CD8-positive, alpha-beta T cell (primary cell): ENCODE measurements at regions of chr9 and their contacts with region 1.

Region 1: DNA sequence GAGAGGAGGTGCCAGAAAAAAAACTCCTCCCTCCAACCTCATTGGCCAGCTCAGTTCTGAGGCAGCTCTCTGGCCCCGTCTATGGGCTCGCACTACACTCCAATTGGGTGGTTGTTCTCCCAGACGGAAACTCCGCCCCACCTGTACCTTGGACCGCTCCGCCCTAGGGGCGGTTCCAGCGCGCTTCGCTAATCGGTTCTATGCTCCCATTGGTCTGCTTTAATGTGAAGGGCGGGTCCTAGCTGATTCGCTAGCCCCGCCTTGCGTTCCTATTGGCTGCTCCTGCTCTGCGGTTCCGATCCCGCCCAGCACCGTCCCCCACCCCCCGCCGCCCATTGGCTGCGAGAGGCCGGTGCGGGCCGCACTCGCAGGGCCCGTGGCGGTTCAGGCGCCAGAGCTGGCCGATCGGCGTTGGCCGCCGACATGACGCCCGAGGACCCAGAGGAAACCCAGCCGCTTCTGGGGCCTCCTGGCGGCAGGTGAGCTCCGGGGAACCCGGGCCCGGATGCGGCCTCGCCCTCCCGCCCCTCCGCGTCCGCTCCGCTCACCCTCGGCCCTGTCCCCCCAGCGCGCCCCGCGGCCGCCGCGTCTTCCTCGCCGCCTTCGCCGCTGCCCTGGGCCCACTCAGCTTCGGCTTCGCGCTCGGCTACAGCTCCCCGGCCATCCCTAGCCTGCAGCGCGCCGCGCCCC is at the start of gene SLC2A8:
- DNase-seq: peak; percentile 73 to 98 (median 86)
- ATAC-seq: peak; percentile 92
- H3K4me3 ChIP-seq: peak within 1 kb of the TSS; percentile 44 to 49
- H3K4me3 Mint-ChIP-seq: peak within 1 kb of the TSS; percentile 76
- H3K27ac ChIP-seq: no peak within 1 kb of the TSS
- H3K27ac Mint-ChIP-seq: no peak within 1 kb of the TSS
- H3K4me1 ChIP-seq: peaks cover 24% of the 10 kb centered on the region
- H3K4me1 Mint-ChIP-seq: peaks cover 17% of the 10 kb centered on the region
- H3K27me3 ChIP-seq: peaks cover 19 to 40% of the 10 kb centered on the region in 2 experiments
- H3K27me3 Mint-ChIP-seq: peaks cover 68% of the 10 kb centered on the region
- CTCF ChIP-seq: no peak
- total RNA-seq, gene SLC2A8: 3.6 to 3.9 TPM

Region 2: GRCh38 chr9:126722252-126723078 is 674.5 kb before region 1 on chr9:
- CTCF ChIA-PET with region 1: no interaction called
- POLR2A ChIA-PET with region 1: no interaction called
- intact Hi-C with region 1: no loop called
- DNase-seq: peak; percentile 66 to 94 (median 90)
- ATAC-seq: peak; percentile 66
- H3K4me3 ChIP-seq: peak overlapping the region; percentile 65 to 92
- H3K4me3 Mint-ChIP-seq: peak overlapping the region; percentile 90
- H3K27ac ChIP-seq: peak overlapping the region; percentile 87 to 99
- H3K27ac Mint-ChIP-seq: peak overlapping the region; percentile 95
- H3K4me1 ChIP-seq: peaks cover 44% of the 10 kb centered on the region
- H3K4me1 Mint-ChIP-seq: peaks cover 53% of the 10 kb centered on the region
- H3K27me3 ChIP-seq: no peaks in the 10 kb centered on the region
- H3K27me3 Mint-ChIP-seq: no peaks in the 10 kb centered on the region
- CTCF ChIP-seq: no peak

Region 3: GRCh38 chr9:126947529-126947928 is 449.4 kb before region 1 on chr9:
- CTCF ChIA-PET with region 1: no interaction called
- POLR2A ChIA-PET with region 1: no interaction called
- intact Hi-C with region 1: loop called in 1 of 2 experiments (anchors 10 kb)
- DNase-seq: peak in 2 of 9 experiments; percentile 17 to 36
- ATAC-seq: peak; percentile 26
- H3K4me3 ChIP-seq: no peak overlapping the region
- H3K4me3 Mint-ChIP-seq: no peak overlapping the region
- H3K27ac ChIP-seq: no peak overlapping the region
- H3K27ac Mint-ChIP-seq: no peak overlapping the region
- H3K4me1 ChIP-seq: no peaks in the 10 kb centered on the region
- H3K4me1 Mint-ChIP-seq: no peaks in the 10 kb centered on the region
- H3K27me3 ChIP-seq: no peaks in the 10 kb centered on the region
- H3K27me3 Mint-ChIP-seq: peaks cover 7% of the 10 kb centered on the region
- CTCF ChIP-seq: no peak

Region 4: GRCh38 chr9:127214421-127215267 is 182.3 kb before region 1 on chr9:
- CTCF ChIA-PET with region 1: no interaction called
- POLR2A ChIA-PET with region 1: no interaction called
- intact Hi-C with region 1: loop called in 1 of 2 experiments (anchors 2 kb)
- DNase-seq: peak; percentile 36 to 73 (median 64)
- ATAC-seq: peak; percentile 93
- H3K4me3 ChIP-seq: no peak overlapping the region
- H3K4me3 Mint-ChIP-seq: no peak overlapping the region
- H3K27ac ChIP-seq: no peak overlapping the region
- H3K27ac Mint-ChIP-seq: no peak overlapping the region
- H3K4me1 ChIP-seq: no peaks in the 10 kb centered on the region
- H3K4me1 Mint-ChIP-seq: peaks cover 3% of the 10 kb centered on the region
- H3K27me3 ChIP-seq: no peaks in the 10 kb centered on the region
- H3K27me3 Mint-ChIP-seq: peaks cover 8% of the 10 kb centered on the region
- CTCF ChIP-seq: peak; percentile 69

Region 5: DNA sequence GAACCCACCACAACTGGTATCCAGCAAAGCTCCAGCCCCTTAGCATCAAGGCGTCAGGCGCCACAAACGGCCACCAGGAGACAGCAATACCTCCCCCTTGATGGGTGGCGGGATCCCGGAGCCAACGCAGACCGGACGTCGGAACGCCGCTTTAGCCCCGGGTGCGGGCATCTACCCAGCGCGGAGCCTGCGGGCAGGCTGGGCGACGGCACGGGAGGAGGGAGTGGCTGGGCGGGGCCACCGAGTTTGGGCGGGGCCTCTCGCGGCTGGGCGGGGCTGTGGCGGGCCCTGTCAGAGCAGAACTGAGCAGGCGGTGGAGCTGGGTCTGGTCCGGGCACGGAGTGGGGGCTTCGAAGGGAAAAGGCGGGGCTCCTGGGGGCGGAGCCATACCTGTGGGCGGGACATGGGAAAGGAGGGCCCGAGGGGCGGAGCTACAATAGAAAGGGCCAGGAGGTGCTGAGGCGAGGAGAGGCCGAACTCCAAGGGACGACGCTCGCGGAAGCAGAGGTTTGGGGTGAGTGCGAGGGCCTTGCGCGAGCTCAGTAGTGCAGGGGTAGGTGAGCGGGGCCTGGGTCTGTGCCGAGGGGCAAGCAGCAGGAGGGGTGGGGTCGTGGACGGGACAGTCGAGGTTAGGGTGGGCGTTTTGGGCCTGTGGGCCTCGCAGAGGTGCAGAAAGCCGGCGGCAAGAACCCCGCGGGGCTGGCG is 172.6 kb before region 1 on chr9:
- CTCF ChIA-PET with region 1: no interaction called
- POLR2A ChIA-PET with region 1: no interaction called
- intact Hi-C with region 1: loop called (anchors 2 kb)
- DNase-seq: peak; percentile 75 to 91 (median 89)
- ATAC-seq: peak; percentile 82
- H3K4me3 ChIP-seq: peak overlapping the region; percentile 66 to 72
- H3K4me3 Mint-ChIP-seq: peak overlapping the region; percentile 82
- H3K27ac ChIP-seq: peak overlapping the region in 1 of 2 experiments; percentile 53
- H3K27ac Mint-ChIP-seq: peak overlapping the region; percentile 77
- H3K4me1 ChIP-seq: peaks cover 33% of the 10 kb centered on the region
- H3K4me1 Mint-ChIP-seq: peaks cover 42% of the 10 kb centered on the region
- H3K27me3 ChIP-seq: no peaks in the 10 kb centered on the region
- H3K27me3 Mint-ChIP-seq: peaks cover 2% of the 10 kb centered on the region
- CTCF ChIP-seq: no peak

Region 6: GRCh38 chr9:127283917-127284316 is 113.0 kb before region 1 on chr9:
- CTCF ChIA-PET with region 1: interaction called, 3 read pairs
- POLR2A ChIA-PET with region 1: no interaction called
- intact Hi-C with region 1: loop called in 1 of 2 experiments (anchors 5 kb)
- DNase-seq: peak in 5 of 9 experiments; percentile 3 to 50 (median 24)
- ATAC-seq: no peak
- H3K4me3 ChIP-seq: no peak overlapping the region
- H3K4me3 Mint-ChIP-seq: no peak overlapping the region
- H3K27ac ChIP-seq: no peak overlapping the region
- H3K27ac Mint-ChIP-seq: no peak overlapping the region
- H3K4me1 ChIP-seq: no peaks in the 10 kb centered on the region
- H3K4me1 Mint-ChIP-seq: no peaks in the 10 kb centered on the region
- H3K27me3 ChIP-seq: no peaks in the 10 kb centered on the region
- H3K27me3 Mint-ChIP-seq: peaks cover 40% of the 10 kb centered on the region
- CTCF ChIP-seq: no peak

Region 7: GRCh38 chr9:127311239-127311741 is 85.7 kb before region 1 on chr9:
- CTCF ChIA-PET with region 1: interaction called, 4 read pairs
- POLR2A ChIA-PET with region 1: no interaction called
- intact Hi-C with region 1: loop called in 1 of 2 experiments (anchors 1 kb)
- DNase-seq: peak in 7 of 9 experiments; percentile 6 to 57 (median 40)
- ATAC-seq: no peak
- H3K4me3 ChIP-seq: no peak overlapping the region
- H3K4me3 Mint-ChIP-seq: no peak overlapping the region
- H3K27ac ChIP-seq: no peak overlapping the region
- H3K27ac Mint-ChIP-seq: no peak overlapping the region
- H3K4me1 ChIP-seq: no peaks in the 10 kb centered on the region
- H3K4me1 Mint-ChIP-seq: no peaks in the 10 kb centered on the region
- H3K27me3 ChIP-seq: no peaks in the 10 kb centered on the region
- H3K27me3 Mint-ChIP-seq: peaks cover 25% of the 10 kb centered on the region
- CTCF ChIP-seq: no peak

Region 8: GRCh38 chr9:127423934-127424675 is 27.2 kb after region 1 on chr9 and contains the start of gene ZNF79:
- CTCF ChIA-PET with region 1: interaction called, 3 read pairs
- POLR2A ChIA-PET with region 1: no interaction called
- intact Hi-C with region 1: loop called in 1 of 2 experiments (anchors 1 kb)
- DNase-seq: peak; percentile 81 to 94 (median 91)
- ATAC-seq: peak; percentile 84
- H3K4me3 ChIP-seq: peak within 1 kb of the TSS; percentile 71 to 98
- H3K4me3 Mint-ChIP-seq: peak within 1 kb of the TSS; percentile 99
- H3K27ac ChIP-seq: peak within 1 kb of the TSS; percentile 67 to 72
- H3K27ac Mint-ChIP-seq: peak within 1 kb of the TSS; percentile 95
- H3K4me1 ChIP-seq: peaks cover 25% of the 10 kb centered on the region
- H3K4me1 Mint-ChIP-seq: peaks cover 44% of the 10 kb centered on the region
- H3K27me3 ChIP-seq: no peaks in the 10 kb centered on the region
- H3K27me3 Mint-ChIP-seq: no peaks in the 10 kb centered on the region
- CTCF ChIP-seq: no peak
- total RNA-seq, gene ZNF79: 7.5 to 7.7 TPM